Testis (tissue), 5 donors: ENCODE measurements at regions of chr10 and their contacts with region 1.

Region 1: DNA sequence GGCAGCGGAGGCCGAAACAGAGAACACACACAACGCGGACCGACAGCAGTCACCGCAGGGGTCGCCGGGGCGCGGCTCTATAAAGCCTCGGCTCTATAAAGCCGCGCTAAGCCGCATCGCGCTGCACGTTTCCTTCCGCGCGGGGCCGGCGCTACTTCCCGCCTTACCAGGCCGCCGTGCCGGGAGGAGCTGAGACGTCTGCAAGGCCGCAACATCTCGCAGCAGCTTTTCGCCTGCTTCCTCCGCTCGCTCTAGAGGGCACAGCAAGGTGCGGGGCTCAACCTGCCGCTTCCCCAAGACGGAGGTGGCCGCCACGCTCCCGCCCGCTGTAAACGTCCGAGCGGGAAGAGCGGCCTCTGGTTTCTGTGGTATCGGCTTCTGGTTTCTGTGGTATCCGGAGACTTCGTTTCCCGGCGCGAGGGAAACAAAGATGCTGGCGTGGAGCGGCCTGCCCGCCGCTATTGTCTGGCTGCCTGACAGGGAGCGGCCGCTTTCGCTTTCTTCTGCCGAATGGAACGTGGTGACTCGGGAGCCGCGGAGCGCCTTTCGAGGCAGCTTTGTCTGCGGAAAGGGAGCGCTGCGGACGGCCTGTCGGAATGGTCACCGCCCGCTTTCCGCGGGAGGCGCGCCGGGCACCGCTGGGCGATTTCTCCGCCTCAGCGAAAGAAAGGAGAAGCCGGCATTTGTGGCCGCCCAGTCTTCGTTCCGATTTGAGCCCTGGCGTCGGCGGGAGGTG is 91.8 kb downstream of the SPAG6 start:
- DNase-seq: peak; percentile 96
- H3K4me3 ChIP-seq: peak overlapping the region; percentile 89 to 96
- H3K27ac ChIP-seq: peak overlapping the region; percentile 97 to 99
- H3K4me1 ChIP-seq: peaks cover 11% of the 10 kb centered on the region
- H3K27me3 ChIP-seq: no peaks in the 10 kb centered on the region
- CTCF ChIP-seq: peak in 1 of 3 experiments; percentile 9
- POLR2A ChIP-seq: peak; percentile 56

Region 2: GRCh38 chr10:22340362-22341189 is 96.5 kb before region 1 on chr10:
- intact Hi-C with region 1: loop called (anchors 10 kb)
- DNase-seq: peak; percentile 82
- H3K4me3 ChIP-seq: peak overlapping the region; percentile 84 to 94
- H3K27ac ChIP-seq: peak overlapping the region; percentile 98 to 99
- H3K4me1 ChIP-seq: peaks cover 11% of the 10 kb centered on the region
- H3K27me3 ChIP-seq: no peaks in the 10 kb centered on the region
- CTCF ChIP-seq: no peak
- POLR2A ChIP-seq: no peak

Region 3: DNA sequence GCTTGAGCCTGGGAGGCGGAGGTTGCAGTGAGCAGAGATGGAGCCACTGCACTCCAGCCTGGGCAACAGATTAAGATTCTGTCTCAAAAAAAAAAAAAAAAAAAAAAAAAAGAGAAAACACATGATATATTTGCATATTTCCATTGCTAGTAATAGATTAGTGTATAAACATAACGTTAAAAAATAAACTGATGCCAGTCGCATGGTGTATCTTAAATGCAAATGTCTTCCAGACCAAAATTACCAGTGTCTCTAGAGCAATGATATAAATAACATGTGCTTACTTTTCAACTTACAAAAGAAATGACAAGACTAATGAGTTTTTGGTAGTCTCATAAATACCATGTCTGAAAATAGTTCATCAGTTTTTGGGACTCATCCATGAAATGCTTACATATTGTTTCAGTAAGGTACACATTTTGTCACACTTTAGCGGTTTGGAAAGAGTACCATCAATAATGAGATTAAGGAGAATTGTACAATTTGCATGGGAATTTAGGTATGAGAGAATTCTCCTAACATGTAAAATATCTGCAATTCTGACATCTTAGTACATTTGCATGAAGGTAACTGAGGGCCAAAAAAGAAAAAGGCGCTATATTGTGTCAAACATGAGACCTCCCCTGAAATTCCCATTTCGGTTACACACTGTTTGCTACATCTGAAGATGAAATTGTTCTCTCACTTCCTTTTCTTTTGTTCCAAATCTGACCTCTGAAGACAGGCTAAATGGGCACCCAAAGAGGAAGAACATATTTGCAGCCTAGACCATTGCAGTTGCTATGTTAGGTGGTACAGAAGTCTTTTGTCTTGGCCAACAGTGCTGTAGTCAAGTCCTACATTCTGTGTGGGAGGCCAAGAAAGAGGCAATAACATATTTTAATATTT is 328.9 kb after region 1 on chr10:
- intact Hi-C with region 1: no loop called
- DNase-seq: no peak
- H3K4me3 ChIP-seq: no peak overlapping the region
- H3K27ac ChIP-seq: no peak overlapping the region
- H3K4me1 ChIP-seq: peaks cover 6% of the 10 kb centered on the region
- H3K27me3 ChIP-seq: no peaks in the 10 kb centered on the region
- CTCF ChIP-seq: no peak
- POLR2A ChIP-seq: no peak